Head of caudate nucleus (tissue), 42 donors: ENCODE measurements at regions of chr12 and their contacts with region 1.

Region 1: GRCh38 chr12:110100315-110100970 is 23.7 kb upstream of the IFT81 start:
- DNase-seq: peak; percentile 27 to 94 (median 82)

Region 2: GRCh38 chr12:110180591-110181005 is 80.2 kb after region 1 on chr12:
- intact Hi-C with region 1: loop called (anchors 10 kb)
- DNase-seq: no peak